ENCODE measurements at regions of chr16 and their contacts with region 1.

Region 1: GRCh38 chr16:11255737-11256660 is at the start of gene SOCS1:
- DNase-seq: peak; percentile 66
- H3K4me3 ChIP-seq: peak within 1 kb of the TSS; percentile 97
- H3K27ac ChIP-seq: peak within 1 kb of the TSS; percentile 97
- H3K27me3 ChIP-seq: peaks cover 2% of the 10 kb centered on the region
- CTCF ChIP-seq: peak; percentile 64
- polyA plus RNA-seq, gene SOCS1: 11.6 and 21.9 TPM in 2 replicates

Region 2: GRCh38 chr16:10964039-10964890 is 291.7 kb before region 1 on chr16:
- CTCF ChIA-PET with region 1: interaction called, 92 read pairs
- POLR2A ChIA-PET with region 1: interaction called, 39 read pairs
- DNase-seq: peak; percentile 65
- H3K4me3 ChIP-seq: no peak overlapping the region
- H3K27ac ChIP-seq: peak overlapping the region; percentile 33
- H3K27me3 ChIP-seq: no peaks in the 10 kb centered on the region
- CTCF ChIP-seq: peak; percentile 96

Region 3: DNA sequence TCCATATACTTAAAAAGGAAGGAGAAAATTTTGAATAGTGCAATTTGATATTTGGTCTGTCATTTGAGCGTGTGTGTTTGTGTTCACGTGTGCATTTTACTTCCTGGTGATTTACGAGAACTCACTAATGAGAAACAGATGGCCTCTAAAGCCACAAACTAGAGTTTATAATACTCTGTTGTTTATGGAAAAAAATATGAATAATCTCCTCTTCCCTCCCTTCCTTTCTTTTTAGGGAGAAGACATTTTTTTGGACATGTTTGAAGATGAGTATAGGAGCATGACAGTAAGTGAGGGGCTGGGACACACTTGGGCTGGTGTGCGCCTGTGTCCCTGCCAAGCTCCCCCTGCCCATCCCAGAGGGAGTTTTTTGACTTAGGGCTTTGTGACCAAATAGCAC is 208.9 kb before region 1 on chr16:
- CTCF ChIA-PET with region 1: no interaction called
- POLR2A ChIA-PET with region 1: interaction called, 10 read pairs
- DNase-seq: peak; percentile 72
- H3K4me3 ChIP-seq: no peak overlapping the region
- H3K27ac ChIP-seq: peak overlapping the region; percentile 75
- H3K27me3 ChIP-seq: no peaks in the 10 kb centered on the region
- CTCF ChIP-seq: no peak

Region 4: DNA sequence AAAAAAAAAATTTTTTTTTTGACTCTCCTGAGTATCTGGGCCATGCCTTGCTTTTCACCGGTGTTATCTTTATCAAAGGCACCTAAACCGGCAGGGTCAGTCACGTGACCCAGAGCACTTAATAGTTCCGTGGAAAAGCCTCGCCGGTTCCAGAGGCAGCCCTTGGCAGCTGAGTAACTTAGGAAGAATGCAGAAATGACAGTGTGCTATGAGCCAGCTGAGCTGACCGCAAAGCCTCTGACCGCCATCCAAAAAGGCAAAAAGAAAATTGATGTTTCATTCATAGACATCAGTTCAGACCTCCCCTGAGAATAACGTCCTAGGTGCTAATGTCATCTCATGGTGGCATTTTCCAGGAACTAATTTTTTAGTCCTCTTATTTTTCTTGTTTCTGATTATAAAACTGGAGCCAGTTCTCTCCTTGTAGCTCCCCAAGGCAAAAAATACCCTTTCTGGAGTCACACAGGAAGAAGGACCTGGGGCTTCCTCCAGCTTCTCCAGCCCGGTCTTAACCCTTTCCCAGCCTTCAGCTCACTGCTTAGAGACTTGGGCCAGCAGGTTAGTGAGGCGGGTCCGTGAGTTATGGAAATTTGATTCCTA is 122.6 kb before region 1 on chr16:
- CTCF ChIA-PET with region 1: interaction called, 8 read pairs
- POLR2A ChIA-PET with region 1: interaction called, 19 read pairs
- DNase-seq: peak; percentile 90
- H3K4me3 ChIP-seq: no peak overlapping the region
- H3K27ac ChIP-seq: peak overlapping the region; percentile 86
- H3K27me3 ChIP-seq: no peaks in the 10 kb centered on the region
- CTCF ChIP-seq: no peak

Region 5: GRCh38 chr16:11224096-11224893 is 31.7 kb before region 1 on chr16:
- CTCF ChIA-PET with region 1: no interaction called
- POLR2A ChIA-PET with region 1: no interaction called
- DNase-seq: no peak
- H3K4me3 ChIP-seq: no peak overlapping the region
- H3K27ac ChIP-seq: no peak overlapping the region
- H3K27me3 ChIP-seq: no peaks in the 10 kb centered on the region
- CTCF ChIP-seq: no peak

Region 6: GRCh38 chr16:11328172-11329070 is 72.4 kb after region 1 on chr16:
- CTCF ChIA-PET with region 1: no interaction called
- POLR2A ChIA-PET with region 1: interaction called, 12 read pairs
- DNase-seq: peak; percentile 90
- H3K4me3 ChIP-seq: peak overlapping the region; percentile 43
- H3K27ac ChIP-seq: peak overlapping the region; percentile 87
- H3K27me3 ChIP-seq: no peaks in the 10 kb centered on the region
- CTCF ChIP-seq: no peak; the same call in 1 of the 2 replicates